GM10248 (cell line): ENCODE measurements at regions of chr2 and their contacts with region 1.

Region 1: DNA sequence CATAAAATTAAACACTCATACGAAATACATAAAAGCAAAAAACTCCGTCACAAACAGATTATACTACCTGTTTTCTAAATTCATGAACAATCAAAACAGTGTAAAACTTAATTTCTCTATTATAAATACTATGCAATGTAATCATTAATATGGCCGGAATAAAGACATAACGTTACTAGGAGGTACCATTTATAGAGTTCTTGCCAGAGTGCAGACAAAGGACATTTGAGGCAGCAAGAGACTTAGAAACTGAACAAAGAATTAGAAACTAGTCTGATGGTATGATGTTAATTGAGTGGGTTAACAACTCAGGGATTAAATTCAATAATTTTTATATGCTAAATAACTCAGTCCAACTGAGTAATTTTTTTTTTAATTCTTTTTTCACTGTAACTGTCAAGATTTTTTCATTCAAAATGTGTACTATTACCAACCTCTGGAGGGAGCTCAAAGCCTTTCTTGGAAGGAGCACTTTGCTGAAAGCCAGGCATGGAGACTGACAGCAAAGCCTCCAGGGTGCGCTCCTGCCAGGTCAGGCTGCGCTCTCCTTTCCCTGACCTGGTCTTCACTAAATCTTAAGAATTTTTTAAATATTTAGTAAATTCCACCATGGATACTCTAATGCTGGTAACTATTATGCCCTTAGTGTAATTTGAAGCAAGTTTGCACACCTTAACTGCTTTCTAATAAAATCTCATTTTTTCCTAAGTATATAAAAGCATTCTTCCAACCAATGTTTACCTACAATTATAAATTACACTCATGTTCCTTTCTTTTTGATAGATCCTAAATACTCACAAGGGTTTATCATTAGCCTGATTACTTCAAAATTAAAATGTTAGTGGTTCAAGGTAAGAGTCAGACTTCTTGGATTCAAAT is 34.1 kb downstream of the WDR35 start:
- DNase-seq: peak; percentile 79
- CTCF ChIP-seq: peak; percentile 86

Region 2: DNA sequence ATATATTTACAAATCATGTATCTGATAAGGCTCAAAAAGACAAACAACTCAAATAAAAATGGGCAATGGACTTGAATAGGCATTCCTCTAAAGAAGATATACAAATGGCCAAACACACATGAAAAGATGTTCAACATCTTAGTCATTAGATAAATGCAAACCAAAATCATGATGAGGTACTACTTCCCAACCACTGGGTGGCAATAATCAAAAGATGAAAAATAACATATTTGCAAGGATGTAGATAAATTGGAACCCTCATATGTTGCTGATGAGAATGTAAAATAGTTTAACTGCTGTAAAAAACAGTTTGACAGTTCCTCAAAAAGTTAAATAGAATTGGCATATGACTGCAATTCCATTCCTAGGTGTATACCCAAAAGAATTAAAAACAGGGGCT is 186.3 kb before region 1 on chr2:
- CTCF ChIA-PET with region 1: no interaction called
- POLR2A ChIA-PET with region 1: no interaction called
- DNase-seq: no peak
- CTCF ChIP-seq: no peak

Region 3: DNA sequence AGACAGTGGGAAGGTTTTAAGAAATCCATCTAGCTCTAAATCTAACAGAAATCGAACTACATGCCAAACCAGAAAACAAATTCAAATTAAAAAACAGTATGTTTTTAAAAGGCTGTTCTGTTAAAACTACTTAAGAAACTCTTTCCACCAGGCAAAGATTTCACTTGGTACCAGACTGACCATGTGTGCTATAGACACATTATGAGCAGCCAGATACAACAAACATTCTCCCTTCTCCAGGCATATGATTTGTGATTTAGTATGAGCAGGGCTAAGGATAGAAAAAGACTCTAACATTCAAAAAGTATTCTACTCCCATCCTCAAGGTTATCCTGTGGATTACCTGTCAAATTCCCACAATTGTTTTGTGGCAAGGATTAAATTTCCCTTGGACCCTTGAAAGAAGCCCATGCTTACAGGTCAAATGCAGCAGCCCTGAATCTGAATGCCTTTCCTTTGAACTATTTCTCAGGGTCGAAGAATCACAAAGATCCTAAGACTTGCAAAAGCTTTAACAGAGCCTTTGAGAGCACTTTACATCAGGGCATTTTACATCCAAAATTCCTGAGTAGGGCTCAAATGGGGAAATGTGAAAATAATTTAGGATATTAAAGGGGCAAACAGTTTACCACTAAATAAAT is 11.5 kb before region 1 on chr2:
- CTCF ChIA-PET with region 1: interaction called, 14 read pairs
- POLR2A ChIA-PET with region 1: no interaction called
- DNase-seq: no peak
- CTCF ChIP-seq: no peak

Region 4: GRCh38 chr2:20097879-20098714 is 142.3 kb after region 1 on chr2:
- CTCF ChIA-PET with region 1: interaction called, 21 read pairs
- POLR2A ChIA-PET with region 1: no interaction called
- DNase-seq: peak; percentile 86
- CTCF ChIP-seq: peak; percentile 80